PC-3 (cell line): ENCODE measurements at regions of chr16 and their contacts with region 1.

Region 1: GRCh38 chr16:81261049-81261648 is 22.7 kb downstream of the BCO1 start:
- DNase-seq: peak; percentile 55
- ATAC-seq: no peak
- H3K4me3 ChIP-seq: no peak overlapping the region
- H3K27ac ChIP-seq: no peak overlapping the region
- H3K4me1 ChIP-seq: peaks cover 5% of the 10 kb centered on the region
- H3K27me3 ChIP-seq: no peaks in the 10 kb centered on the region
- CTCF ChIP-seq: peak; percentile 75

Region 2: GRCh38 chr16:81314603-81315270 is 53.6 kb after region 1 on chr16 and contains the start of gene GAN:
- CTCF ChIA-PET with region 1: interaction called, 3 read pairs
- POLR2A ChIA-PET with region 1: no interaction called
- intact Hi-C with region 1: loop called (anchors 5 kb)
- DNase-seq: peak; percentile 92
- ATAC-seq: peak; percentile 87
- H3K4me3 ChIP-seq: peak within 1 kb of the TSS; percentile 95
- H3K27ac ChIP-seq: no peak within 1 kb of the TSS
- H3K4me1 ChIP-seq: peaks cover 18% of the 10 kb centered on the region
- H3K27me3 ChIP-seq: no peaks in the 10 kb centered on the region
- CTCF ChIP-seq: no peak
- total RNA-seq, gene GAN: 5.3 and 5.8 TPM in 2 replicates

Region 3: GRCh38 chr16:81349996-81350618 is 89.0 kb after region 1 on chr16:
- CTCF ChIA-PET with region 1: no interaction called
- POLR2A ChIA-PET with region 1: no interaction called
- intact Hi-C with region 1: loop called (anchors 1 kb)
- DNase-seq: peak; percentile 57
- ATAC-seq: peak; percentile 84
- H3K4me3 ChIP-seq: no peak overlapping the region
- H3K27ac ChIP-seq: no peak overlapping the region
- H3K4me1 ChIP-seq: no peaks in the 10 kb centered on the region
- H3K27me3 ChIP-seq: no peaks in the 10 kb centered on the region
- CTCF ChIP-seq: peak; percentile 62

Region 4: DNA sequence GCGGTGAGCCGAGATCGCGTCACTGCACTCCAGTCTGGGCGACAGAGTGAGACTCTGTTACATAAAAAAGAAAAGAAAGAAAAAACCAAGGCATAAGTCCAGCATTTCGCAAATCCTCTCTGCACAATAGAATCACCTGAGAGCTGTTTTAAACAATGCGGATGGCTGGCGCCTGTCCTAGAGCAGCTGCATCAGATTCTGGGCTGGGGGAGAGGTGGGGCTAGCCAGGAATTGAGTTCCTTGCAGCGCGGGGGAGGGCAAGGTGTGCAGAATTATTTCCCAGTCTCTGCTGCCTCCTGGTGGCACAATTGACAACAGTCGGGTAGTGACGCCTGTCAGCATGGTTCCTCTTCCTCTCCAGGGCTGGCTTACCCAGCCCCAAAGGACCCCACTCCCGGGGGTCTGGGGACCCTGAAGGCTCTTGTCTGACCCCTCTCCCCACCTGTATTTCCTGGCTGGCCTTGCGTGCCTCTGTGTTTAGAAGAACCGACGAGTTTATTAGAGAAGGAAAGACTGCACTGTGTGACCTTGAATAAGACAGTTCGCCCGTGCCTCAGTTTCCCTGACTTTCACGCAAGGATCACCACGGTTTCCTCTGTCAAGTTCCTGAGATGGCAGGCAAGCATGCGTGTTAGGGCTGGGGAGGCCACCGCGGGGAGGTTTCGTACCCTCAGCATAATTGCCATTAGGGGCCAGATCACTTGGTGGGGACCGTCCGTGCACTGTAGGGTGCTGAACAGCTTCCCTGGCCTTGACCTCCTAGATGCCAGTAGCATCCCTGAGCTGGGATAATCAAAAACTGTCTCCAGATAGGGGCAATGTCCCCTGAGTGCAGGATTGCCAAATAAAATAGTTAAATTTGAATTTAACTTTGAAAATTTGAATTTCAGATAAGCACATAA is 477.0 kb after region 1 on chr16:
- CTCF ChIA-PET with region 1: no interaction called
- POLR2A ChIA-PET with region 1: no interaction called
- intact Hi-C with region 1: loop called (anchors 5 kb)
- DNase-seq: peak; percentile 86
- ATAC-seq: peak; percentile 96
- H3K4me3 ChIP-seq: peak overlapping the region; percentile 54; the same call in 1 of the 2 replicates
- H3K27ac ChIP-seq: no peak overlapping the region
- H3K4me1 ChIP-seq: peaks cover 5% of the 10 kb centered on the region; the same call in 1 of the 2 replicates
- H3K27me3 ChIP-seq: no peaks in the 10 kb centered on the region
- CTCF ChIP-seq: peak; percentile 78